Astrocyte of the cerebellum (primary cell): ENCODE measurements at regions of chr5 and their contacts with region 1.

Region 1: GRCh38 chr5:58318468-58318867 is 141.4 kb downstream of the PLK2 start:
- DNase-seq: no peak
- H3K4me3 ChIP-seq: no peak overlapping the region
- CTCF ChIP-seq: no peak

Region 2: DNA sequence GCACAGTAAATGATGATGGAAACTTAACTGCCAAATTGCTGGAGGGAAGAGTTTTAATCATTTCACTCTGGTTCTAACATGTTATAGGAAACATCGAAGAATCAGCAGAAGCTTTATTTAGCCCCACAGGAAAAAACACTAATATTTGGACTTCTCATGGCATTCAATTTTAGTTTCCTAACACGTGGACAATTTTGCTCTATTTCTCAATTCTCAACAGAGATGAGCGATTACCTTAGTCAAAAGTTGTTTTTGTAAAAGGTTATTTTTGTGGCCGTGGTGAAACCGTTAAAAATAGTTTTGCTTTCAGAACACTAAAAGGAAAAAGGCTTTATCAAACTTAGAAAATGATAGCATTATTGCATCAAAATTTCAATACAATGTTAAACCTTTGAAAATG is 93.8 kb before region 1 on chr5:
- in situ Hi-C with region 1: no loop called
- DNase-seq: no peak
- H3K4me3 ChIP-seq: no peak overlapping the region
- CTCF ChIP-seq: no peak

Region 3: DNA sequence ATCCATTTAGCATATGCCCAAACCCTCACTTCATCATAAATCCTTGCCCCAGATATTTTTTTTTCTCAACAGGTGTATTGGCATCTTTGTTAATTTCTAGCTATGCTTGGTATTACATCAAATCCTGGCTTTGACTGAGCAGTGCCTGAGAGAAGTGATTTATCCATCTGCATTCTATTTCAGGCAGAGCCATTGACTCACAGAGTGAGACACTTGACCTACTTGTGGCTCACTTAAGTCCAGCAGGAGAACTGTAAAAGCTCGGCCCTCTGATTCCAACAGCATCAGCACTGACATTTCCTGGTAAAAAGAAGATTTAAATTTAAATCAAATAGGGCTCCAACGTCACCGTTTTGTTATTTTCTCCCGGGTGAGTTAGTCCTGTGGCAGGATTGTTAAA is 48.0 kb after region 1 on chr5:
- in situ Hi-C with region 1: loop called (anchors 10 kb)
- DNase-seq: no peak
- H3K4me3 ChIP-seq: no peak overlapping the region
- CTCF ChIP-seq: no peak